ENCODE measurements at regions of chr10 and their contacts with region 1.

Region 1: GRCh38 chr10:110354322-110354766 is 49.6 kb upstream of the SMNDC1 start:
- DNase-seq: peak; percentile 51
- H3K4me3 ChIP-seq: no peak overlapping the region
- CTCF ChIP-seq: peak; percentile 87

Region 2: GRCh38 chr10:109838592-109839244 is 515.6 kb before region 1 on chr10:
- CTCF ChIA-PET with region 1: no interaction called
- POLR2A ChIA-PET with region 1: no interaction called
- DNase-seq: no peak
- H3K4me3 ChIP-seq: no peak overlapping the region
- CTCF ChIP-seq: no peak

Region 3: DNA sequence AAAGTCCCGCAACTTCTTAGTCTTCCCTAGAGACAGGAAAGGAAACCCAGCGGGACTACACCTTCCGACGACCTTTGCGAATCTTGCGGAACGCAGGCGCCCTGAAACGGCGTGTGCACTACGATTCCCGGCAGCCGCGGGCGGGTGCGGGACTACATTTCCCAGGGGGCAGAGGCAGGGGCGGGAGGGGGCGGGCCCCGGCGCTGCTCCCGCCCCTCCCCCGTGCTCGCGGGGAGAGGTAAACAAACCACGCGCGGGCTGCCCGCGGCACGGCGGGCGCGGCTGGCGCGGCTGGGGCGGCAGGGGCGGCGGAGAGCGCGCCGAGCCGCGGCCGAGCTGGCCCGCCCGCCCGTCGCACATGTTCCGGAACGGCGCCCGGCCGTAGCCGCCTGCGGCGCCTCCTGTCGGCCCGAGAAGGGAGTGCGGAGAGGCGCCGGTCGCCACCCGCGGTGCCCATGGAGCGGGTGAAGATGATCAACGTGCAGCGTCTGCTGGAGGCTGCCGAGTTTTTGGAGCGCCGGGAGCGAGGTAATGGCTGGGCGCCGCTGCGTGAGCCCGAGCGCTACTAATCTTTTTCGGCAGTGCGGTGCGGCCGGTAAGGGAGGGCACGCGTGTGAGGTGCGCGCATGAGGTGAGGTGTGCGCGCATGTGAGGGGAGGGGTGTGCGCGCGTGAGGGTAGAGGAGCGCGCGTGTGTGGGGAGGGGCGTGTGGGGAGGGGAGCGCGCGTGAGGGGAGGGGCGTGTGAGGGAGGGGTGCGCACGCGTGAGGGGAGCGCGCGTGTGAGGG is 128.4 kb before region 1 on chr10:
- CTCF ChIA-PET with region 1: no interaction called
- POLR2A ChIA-PET with region 1: no interaction called
- DNase-seq: peak; percentile 68
- H3K4me3 ChIP-seq: peak overlapping the region; percentile 79
- CTCF ChIP-seq: peak; percentile 84

Region 4: DNA sequence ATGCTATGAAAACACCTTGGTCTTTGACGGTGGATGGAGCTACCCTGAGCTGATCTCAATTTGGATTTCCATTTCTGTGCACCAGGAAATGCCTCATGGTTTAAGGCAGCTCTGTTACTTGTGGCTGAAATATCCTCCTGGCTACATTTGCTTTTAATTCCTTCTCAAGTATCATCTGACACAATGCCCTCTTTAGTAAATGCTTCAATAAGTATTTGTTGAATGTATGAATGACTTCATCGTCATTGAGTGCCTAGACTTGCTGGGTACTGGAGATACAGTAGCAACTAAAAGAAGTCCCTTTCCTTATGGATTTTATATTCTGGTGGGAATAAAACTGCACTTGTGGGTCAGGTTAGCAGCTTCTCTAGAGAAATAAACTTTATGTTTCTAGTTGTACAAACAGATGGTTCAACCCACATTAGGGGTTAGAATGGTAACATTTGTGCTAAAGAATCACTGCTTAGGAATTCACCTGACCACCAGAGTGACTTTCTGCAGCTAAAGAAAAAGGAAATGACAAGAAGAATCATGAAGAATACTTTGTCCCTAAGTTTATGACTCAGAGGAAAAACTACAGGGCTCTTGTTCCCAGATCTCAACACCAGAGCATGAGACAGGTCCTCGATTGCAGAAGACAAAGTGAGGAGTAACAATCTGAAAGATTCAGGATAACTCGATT is 27.9 kb before region 1 on chr10:
- CTCF ChIA-PET with region 1: interaction called, 14 read pairs
- POLR2A ChIA-PET with region 1: interaction called, 4 read pairs
- DNase-seq: peak; percentile 64
- H3K4me3 ChIP-seq: no peak overlapping the region
- CTCF ChIP-seq: no peak

Region 5: DNA sequence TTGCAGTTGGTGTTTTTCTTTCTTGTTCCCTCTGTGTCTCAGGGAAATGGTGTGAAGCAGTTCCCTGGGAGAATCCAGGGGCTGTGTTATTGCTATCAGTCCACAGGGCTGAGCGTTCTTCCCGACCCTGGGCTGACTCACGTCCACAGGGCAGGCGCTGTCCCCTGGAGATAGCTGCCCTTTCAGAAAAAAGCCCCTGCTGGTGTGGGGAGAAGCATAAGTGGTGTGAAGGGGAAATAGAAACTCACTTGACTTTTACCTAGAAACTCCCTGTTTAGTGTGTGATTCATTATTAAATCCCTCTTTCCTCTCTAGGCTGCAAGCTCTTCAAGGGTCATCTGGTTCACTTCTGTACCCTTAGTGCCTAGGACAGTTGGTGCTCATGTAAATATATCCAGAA is 13.7 kb after region 1 on chr10:
- CTCF ChIA-PET with region 1: interaction called, 44 read pairs
- POLR2A ChIA-PET with region 1: interaction called, 4 read pairs
- DNase-seq: no peak
- H3K4me3 ChIP-seq: no peak overlapping the region
- CTCF ChIP-seq: no peak

Region 6: GRCh38 chr10:110492069-110492822 is 137.9 kb after region 1 on chr10:
- CTCF ChIA-PET with region 1: interaction called, 106 read pairs
- POLR2A ChIA-PET with region 1: interaction called, 42 read pairs
- DNase-seq: no peak
- H3K4me3 ChIP-seq: no peak overlapping the region
- CTCF ChIP-seq: no peak

Region 7: GRCh38 chr10:110512461-110513187 is 158.3 kb after region 1 on chr10:
- CTCF ChIA-PET with region 1: interaction called, 17 read pairs
- POLR2A ChIA-PET with region 1: interaction called, 3 read pairs
- DNase-seq: no peak
- H3K4me3 ChIP-seq: no peak overlapping the region
- CTCF ChIP-seq: no peak

Measured in AG04449 (cell line).